GM12878 (cell line): ENCODE measurements at regions of chr17 and their contacts with region 1.

Region 1: GRCh38 chr17:67082107-67082506 is 37.8 kb downstream of the CACNG1 start:
- DNase-seq: peak; percentile 26
- ATAC-seq: peak; percentile 90
- H3K4me3 ChIP-seq: no peak overlapping the region
- H3K27ac ChIP-seq: no peak overlapping the region
- H3K4me1 ChIP-seq: peaks cover 15% of the 10 kb centered on the region
- H3K27me3 ChIP-seq: no peaks in the 10 kb centered on the region
- CTCF ChIP-seq: peak; percentile 33 to 51 (median 43); a peak in 5 of 6 replicates
- EP300 ChIP-seq: 0 out of 4 replicates have a peak, but pooled peaks of 1 of the 2 experiments have one; percentile 37
- POLR2A ChIP-seq: no peak
- RAD21 ChIP-seq: peak; percentile 80

Region 2: DNA sequence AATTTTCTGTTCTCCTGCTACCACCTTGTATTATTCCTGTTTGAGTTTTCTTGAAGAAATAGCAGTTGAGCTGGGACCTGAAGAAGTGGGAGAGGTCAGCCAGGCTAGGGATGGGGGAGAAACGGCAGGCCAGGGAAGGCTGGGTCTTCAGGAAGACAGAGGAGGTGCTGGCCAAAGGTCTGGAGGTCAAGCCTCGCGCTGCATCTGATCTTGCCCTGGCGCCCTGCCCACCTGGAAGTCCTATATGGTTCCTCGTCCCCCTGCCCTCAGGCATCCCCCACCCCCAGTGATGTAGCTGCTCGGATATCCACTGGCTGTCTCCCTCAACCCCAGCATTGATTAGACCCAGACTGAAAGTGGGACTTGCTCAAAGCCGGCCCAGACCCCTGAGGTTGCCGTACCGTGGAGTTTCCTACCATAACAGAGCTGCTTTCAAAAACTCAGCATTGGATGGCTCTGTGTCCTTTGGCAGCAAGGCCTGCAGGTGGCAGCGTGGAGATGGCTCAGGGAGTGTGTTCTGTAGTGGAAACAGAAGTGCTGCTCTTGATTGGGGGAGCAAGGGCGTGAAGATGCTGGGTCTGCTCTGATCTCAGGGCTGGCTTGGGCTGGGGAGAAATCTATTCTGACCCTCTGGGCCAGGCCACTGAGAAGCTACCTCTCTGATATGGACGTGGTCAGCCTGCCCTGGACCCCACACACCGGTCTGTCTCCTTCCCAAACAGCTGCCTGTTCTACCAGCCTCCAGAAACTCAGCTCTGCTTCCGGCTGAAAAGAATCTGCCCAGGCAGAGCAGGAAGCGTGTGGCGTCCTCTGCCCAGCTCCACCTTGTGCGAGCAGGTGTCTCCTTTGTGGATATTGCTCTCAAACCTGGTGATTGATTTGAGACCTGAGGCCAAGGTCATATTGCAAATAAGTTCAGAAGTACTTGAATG is 354.2 kb before region 1 on chr17:
- CTCF ChIA-PET with region 1: interaction called, 29 read pairs
- POLR2A ChIA-PET with region 1: no interaction called
- RAD21 ChIA-PET with region 1: interaction called, 8 read pairs
- SMC1A ChIA-PET with region 1: interaction called, 6 read pairs
- in situ Hi-C with region 1: no loop called
- intact Hi-C with region 1: no loop called
- DNase-seq: no peak
- ATAC-seq: peak; percentile 99
- H3K4me3 ChIP-seq: no peak overlapping the region
- H3K27ac ChIP-seq: no peak overlapping the region
- H3K4me1 ChIP-seq: no peaks in the 10 kb centered on the region
- H3K27me3 ChIP-seq: no peaks in the 10 kb centered on the region; a peak in 2 of 4 replicates
- CTCF ChIP-seq: peak; percentile 72 to 87 (median 80); a peak in 5 of 6 replicates
- EP300 ChIP-seq: no peak
- POLR2A ChIP-seq: no peak
- RAD21 ChIP-seq: peak; percentile 83

Region 3: GRCh38 chr17:66906321-66907278 is 175.5 kb before region 1 on chr17:
- CTCF ChIA-PET with region 1: interaction called, 9 read pairs
- POLR2A ChIA-PET with region 1: no interaction called
- RAD21 ChIA-PET with region 1: interaction called, 9 read pairs
- SMC1A ChIA-PET with region 1: interaction called, 8 read pairs
- in situ Hi-C with region 1: no loop called
- intact Hi-C with region 1: loop called (anchors 2 kb)
- DNase-seq: peak; percentile 25
- ATAC-seq: peak; percentile 83
- H3K4me3 ChIP-seq: no peak overlapping the region
- H3K27ac ChIP-seq: no peak overlapping the region
- H3K4me1 ChIP-seq: no peaks in the 10 kb centered on the region
- H3K27me3 ChIP-seq: no peaks in the 10 kb centered on the region; a peak in 1 of 4 replicates
- CTCF ChIP-seq: peak; percentile 83 to 92 (median 87)
- EP300 ChIP-seq: no peak
- POLR2A ChIP-seq: no peak
- RAD21 ChIP-seq: peak; percentile 77

Region 4: DNA sequence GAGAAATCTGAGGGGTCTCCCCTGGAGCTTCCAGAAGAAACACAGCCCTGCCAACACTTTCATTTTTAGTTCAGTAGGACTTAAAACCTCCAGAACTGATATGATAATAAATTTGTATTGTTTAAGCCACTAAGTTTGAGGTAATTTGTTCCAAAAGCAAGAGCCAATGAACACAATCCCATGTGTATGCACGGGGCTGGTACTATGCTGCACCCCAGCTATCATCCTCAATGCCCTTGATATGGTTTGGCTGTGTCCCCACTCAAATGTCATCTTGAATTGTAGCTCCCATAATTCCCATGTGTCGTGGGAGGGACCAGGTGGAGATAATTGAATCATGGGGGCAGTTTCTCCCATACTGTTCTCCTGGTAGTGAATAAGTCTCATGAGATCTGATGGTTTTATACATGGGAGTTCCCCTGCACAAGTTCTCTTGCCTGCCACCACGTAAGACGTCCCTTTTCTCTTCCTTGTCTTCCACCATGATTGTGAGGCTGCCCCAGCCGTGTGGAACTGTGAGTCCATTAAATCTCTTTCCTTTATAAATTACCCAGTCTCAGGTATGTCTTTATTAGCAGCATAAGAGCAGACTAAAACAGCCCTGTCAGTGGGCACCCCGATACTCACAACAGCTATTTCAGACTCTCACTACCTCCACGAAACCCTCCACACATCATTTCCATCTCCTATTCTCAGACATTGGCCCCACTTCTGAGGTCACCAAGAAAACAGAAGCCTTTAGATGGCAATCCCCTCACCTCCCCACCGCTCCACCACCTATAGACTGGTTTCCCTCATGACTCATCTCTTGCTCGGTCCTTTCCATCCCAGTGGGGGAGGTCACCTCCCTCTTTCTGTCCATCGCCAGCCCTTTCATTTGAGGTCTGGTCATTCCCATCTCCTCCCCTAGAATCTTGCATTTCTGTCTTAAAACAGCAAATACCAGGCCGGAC is 46.7 kb before region 1 on chr17:
- CTCF ChIA-PET with region 1: interaction called, 6 read pairs
- POLR2A ChIA-PET with region 1: interaction called, 7 read pairs
- RAD21 ChIA-PET with region 1: interaction called, 19 read pairs
- SMC1A ChIA-PET with region 1: interaction called, 11 read pairs
- in situ Hi-C with region 1: no loop called
- intact Hi-C with region 1: loop called (anchors 2 kb)
- DNase-seq: peak; percentile 64
- ATAC-seq: peak; percentile 94
- H3K4me3 ChIP-seq: peak overlapping the region; percentile 35; the same call in 1 of the 2 replicates
- H3K27ac ChIP-seq: peak overlapping the region; percentile 35
- H3K4me1 ChIP-seq: peaks cover 22% of the 10 kb centered on the region
- H3K27me3 ChIP-seq: no peaks in the 10 kb centered on the region
- CTCF ChIP-seq: no peak
- EP300 ChIP-seq: peak; percentile 46 to 66; a peak in 3 of 4 replicates
- POLR2A ChIP-seq: no peak
- RAD21 ChIP-seq: 0 out of 2 replicates have a peak, but pooled peaks have one; percentile 0

Region 5: GRCh38 chr17:67293251-67294203 is 211.4 kb after region 1 on chr17:
- CTCF ChIA-PET with region 1: interaction called, 10 read pairs
- POLR2A ChIA-PET with region 1: no interaction called
- RAD21 ChIA-PET with region 1: interaction called, 4 read pairs
- SMC1A ChIA-PET with region 1: no interaction called
- in situ Hi-C with region 1: no loop called
- intact Hi-C with region 1: no loop called
- DNase-seq: peak; percentile 4
- ATAC-seq: peak; percentile 100
- H3K4me3 ChIP-seq: no peak overlapping the region
- H3K27ac ChIP-seq: no peak overlapping the region
- H3K4me1 ChIP-seq: no peaks in the 10 kb centered on the region
- H3K27me3 ChIP-seq: no peaks in the 10 kb centered on the region
- CTCF ChIP-seq: peak; percentile 76 to 93 (median 83)
- EP300 ChIP-seq: no peak
- POLR2A ChIP-seq: no peak
- RAD21 ChIP-seq: peak; percentile 77